Prostate gland (tissue), 2 donors: ENCODE measurements at regions of chr2 and their contacts with region 1.

Region 1: DNA sequence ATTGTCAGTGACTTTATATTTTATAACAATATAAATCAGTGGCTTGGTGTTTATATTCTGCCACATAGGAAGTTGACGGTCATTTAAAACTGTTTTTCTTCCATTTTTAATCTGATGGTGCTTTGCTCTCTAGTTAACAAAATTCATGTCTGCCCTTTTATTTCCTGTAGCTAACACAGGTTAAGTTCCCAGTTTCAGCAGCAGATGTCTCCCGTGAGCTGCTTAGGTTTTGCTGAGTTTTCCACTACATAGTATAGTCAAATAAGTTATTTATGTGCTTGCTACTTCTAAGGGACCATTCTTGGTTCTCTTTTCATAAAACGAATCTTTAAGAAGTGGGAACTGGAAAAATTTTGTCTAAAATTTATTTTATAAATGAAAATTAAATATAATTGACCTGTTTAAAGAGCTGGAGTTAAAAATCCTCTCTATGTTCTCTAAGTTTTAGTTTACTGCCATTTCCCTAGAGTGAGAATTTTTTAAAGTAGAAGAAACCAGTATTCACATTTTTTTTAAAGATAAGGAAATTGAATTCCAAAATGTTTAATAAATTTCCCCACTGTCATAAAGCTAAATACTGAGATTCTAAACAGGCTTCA is 20.6 kb downstream of the HTR2B start:
- DNase-seq: peak; percentile 33
- H3K4me3 ChIP-seq: no peak overlapping the region
- H3K27ac ChIP-seq: no peak overlapping the region
- H3K4me1 ChIP-seq: no peaks in the 10 kb centered on the region
- H3K27me3 ChIP-seq: no peaks in the 10 kb centered on the region
- CTCF ChIP-seq: peak in 3 of 4 experiments; percentile 65 to 84 (median 81)
- POLR2A ChIP-seq: no peak

Region 2: GRCh38 chr2:231191896-231192872 is 88.0 kb after region 1 on chr2:
- intact Hi-C with region 1: loop called (anchors 1 kb)
- DNase-seq: peak; percentile 25
- H3K4me3 ChIP-seq: no peak overlapping the region
- H3K27ac ChIP-seq: peak overlapping the region; percentile 54 to 78
- H3K4me1 ChIP-seq: no peaks in the 10 kb centered on the region
- H3K27me3 ChIP-seq: no peaks in the 10 kb centered on the region
- CTCF ChIP-seq: peak in 3 of 4 experiments; percentile 18 to 48 (median 43)
- POLR2A ChIP-seq: no peak

Region 3: GRCh38 chr2:231297108-231297908 is 193.1 kb after region 1 on chr2:
- intact Hi-C with region 1: no loop called
- DNase-seq: peak; percentile 31
- H3K4me3 ChIP-seq: no peak overlapping the region
- H3K27ac ChIP-seq: no peak overlapping the region
- H3K4me1 ChIP-seq: peaks cover 2% of the 10 kb centered on the region
- H3K27me3 ChIP-seq: no peaks in the 10 kb centered on the region
- CTCF ChIP-seq: peak in 3 of 4 experiments; percentile 35 to 60 (median 54)
- POLR2A ChIP-seq: no peak

Region 4: DNA sequence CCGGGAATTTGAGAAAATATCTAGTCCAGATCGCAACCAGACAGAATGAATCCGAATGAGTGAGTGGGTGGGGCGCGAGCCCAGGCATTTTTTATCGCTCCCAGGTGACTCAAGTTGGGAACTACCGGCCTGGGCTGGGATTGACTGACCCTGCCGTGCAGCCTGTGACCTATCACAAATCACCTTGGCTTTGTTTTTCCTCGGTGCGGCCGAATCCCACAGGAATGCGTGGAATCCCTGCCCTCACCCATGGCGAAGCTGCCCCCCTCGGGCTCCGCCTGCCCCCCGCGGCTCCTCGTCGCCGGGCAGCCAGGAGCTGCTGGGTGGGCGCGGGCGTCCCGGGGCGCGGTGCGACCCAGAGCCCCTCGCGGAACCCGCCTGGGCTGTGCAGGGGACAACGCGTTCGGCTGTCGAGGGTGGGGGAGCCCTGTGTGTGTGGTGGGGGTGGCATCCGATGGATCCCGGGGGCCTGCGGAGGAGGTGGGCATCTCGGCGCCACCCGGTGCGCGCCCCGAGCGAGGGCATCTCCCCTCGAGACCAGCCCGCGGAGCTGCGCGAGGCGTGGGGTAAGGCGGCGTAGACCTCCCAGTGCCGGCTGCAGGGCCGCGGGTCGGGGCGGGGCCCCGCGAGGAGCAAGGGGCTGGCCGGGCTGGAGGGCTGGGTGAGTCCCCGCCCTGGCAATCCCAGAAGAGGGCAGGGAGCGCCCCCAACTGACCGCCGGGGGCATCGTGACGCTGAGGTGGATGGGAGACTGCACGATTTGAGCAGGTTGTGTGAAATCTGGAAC is 307.8 kb after region 1 on chr2:
- intact Hi-C with region 1: loop called (anchors 5 kb)
- DNase-seq: peak; percentile 77
- H3K4me3 ChIP-seq: peak overlapping the region; percentile 49 to 52
- H3K27ac ChIP-seq: peak overlapping the region; percentile 29 to 60
- H3K4me1 ChIP-seq: no peaks in the 10 kb centered on the region
- H3K27me3 ChIP-seq: no peaks in the 10 kb centered on the region
- CTCF ChIP-seq: peak; percentile 50 to 85 (median 78)
- POLR2A ChIP-seq: no peak

Region 5: DNA sequence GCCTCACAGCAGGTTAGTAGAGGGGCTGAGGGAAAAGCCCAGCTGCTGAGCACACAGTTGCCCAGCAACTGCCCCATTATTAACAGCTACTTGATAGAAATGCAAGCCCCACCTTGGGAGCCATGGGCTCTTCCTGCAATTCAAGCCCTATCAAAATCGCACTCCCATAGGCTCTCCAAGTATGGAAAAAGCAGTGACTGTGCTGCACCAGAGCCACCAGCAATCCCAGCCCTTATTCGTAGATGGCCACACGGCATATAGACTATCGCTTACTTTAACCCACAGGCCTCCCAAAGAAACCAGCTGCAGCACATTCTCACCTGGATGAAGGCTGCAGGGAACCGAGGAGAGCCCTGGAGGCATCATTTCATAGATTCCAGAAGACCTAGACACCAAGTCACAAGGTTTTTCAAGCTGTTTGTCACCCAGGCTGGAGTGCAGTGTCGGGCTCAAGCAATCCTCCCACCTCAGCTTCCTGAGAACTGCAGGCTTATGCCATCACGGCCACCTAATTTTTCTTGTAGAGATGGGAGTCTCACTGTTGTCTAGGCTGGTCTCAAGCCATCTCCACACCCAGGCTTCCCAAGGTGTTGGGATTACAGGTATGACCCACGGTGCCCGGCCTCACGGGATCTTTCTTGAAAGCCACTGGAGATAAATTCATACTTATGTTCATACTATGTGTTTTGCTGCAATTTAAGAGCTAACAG is 348.7 kb after region 1 on chr2:
- intact Hi-C with region 1: loop called (anchors 5 kb)
- DNase-seq: no peak
- H3K4me3 ChIP-seq: no peak overlapping the region
- H3K27ac ChIP-seq: no peak overlapping the region
- H3K4me1 ChIP-seq: no peaks in the 10 kb centered on the region
- H3K27me3 ChIP-seq: no peaks in the 10 kb centered on the region
- CTCF ChIP-seq: no peak
- POLR2A ChIP-seq: no peak